GM12878 (cell line): ENCODE measurements at regions of chr4 and their contacts with region 1.

Region 1: DNA sequence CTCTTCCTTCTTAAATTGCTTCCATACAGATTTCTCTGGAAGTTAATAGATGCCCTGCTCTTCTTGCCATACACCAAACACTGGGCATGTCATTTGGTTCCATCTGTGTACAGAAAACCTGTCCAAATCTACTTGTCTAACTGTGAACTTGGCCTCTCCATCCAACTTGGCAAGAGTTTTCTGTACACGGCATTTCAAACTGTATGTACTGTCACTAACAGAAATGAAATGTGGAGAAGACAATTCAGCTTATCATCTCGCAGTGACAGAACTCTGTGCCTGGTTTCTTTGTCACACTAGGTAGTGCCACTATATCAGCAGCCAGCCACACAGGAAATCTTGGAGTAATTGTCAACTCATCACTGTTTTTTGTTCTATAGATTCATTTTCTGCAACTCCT is 58.2 kb downstream of the CXXC4 start:
- DNase-seq: no peak
- ATAC-seq: no peak
- H3K4me3 ChIP-seq: no peak overlapping the region
- H3K27ac ChIP-seq: no peak overlapping the region
- H3K4me1 ChIP-seq: no peaks in the 10 kb centered on the region
- H3K27me3 ChIP-seq: no peaks in the 10 kb centered on the region
- CTCF ChIP-seq: no peak
- EP300 ChIP-seq: no peak
- POLR2A ChIP-seq: no peak
- RAD21 ChIP-seq: no peak

Region 2: GRCh38 chr4:104420766-104421165 is 15.8 kb before region 1 on chr4:
- CTCF ChIA-PET with region 1: interaction called, 3 read pairs
- POLR2A ChIA-PET with region 1: no interaction called
- RAD21 ChIA-PET with region 1: interaction called, 3 read pairs
- SMC1A ChIA-PET with region 1: interaction called, 19 read pairs
- in situ Hi-C with region 1: no loop called
- intact Hi-C with region 1: no loop called
- DNase-seq: no peak
- ATAC-seq: no peak
- H3K4me3 ChIP-seq: no peak overlapping the region
- H3K27ac ChIP-seq: no peak overlapping the region
- H3K4me1 ChIP-seq: no peaks in the 10 kb centered on the region
- H3K27me3 ChIP-seq: no peaks in the 10 kb centered on the region
- CTCF ChIP-seq: no peak
- EP300 ChIP-seq: no peak
- POLR2A ChIP-seq: no peak
- RAD21 ChIP-seq: no peak